SK-N-SH (cell line): ENCODE measurements at regions of chr1 and their contacts with region 1.

Region 1: GRCh38 chr1:85911742-85912141 is 203.5 kb upstream of the ZNHIT6 start:
- DNase-seq: no peak
- H3K4me3 ChIP-seq: peak overlapping the region in 1 of 2 experiments; percentile 9; a peak in 1 of 4 replicates
- H3K27ac ChIP-seq: no peak overlapping the region
- H3K4me1 ChIP-seq: no peaks in the 10 kb centered on the region
- H3K27me3 ChIP-seq: no peaks in the 10 kb centered on the region; the same call in 1 of the 2 replicates
- CTCF ChIP-seq: peak; percentile 47
- EP300 ChIP-seq: no peak
- RAD21 ChIP-seq: peak; percentile 25; the same call in 1 of the 2 replicates

Region 2: GRCh38 chr1:85894651-85895050 is 17.1 kb before region 1 on chr1:
- CTCF ChIA-PET with region 1: interaction called, 12 read pairs
- POLR2A ChIA-PET with region 1: no interaction called
- DNase-seq: peak; percentile 59
- H3K4me3 ChIP-seq: no peak overlapping the region; a peak in 1 of 4 replicates
- H3K27ac ChIP-seq: no peak overlapping the region
- H3K4me1 ChIP-seq: no peaks in the 10 kb centered on the region
- H3K27me3 ChIP-seq: no peaks in the 10 kb centered on the region
- CTCF ChIP-seq: peak; percentile 61
- EP300 ChIP-seq: no peak
- RAD21 ChIP-seq: peak; percentile 77

Region 3: GRCh38 chr1:85933961-85934360 is 22.2 kb after region 1 on chr1:
- CTCF ChIA-PET with region 1: no interaction called
- POLR2A ChIA-PET with region 1: no interaction called
- DNase-seq: no peak
- H3K4me3 ChIP-seq: no peak overlapping the region
- H3K27ac ChIP-seq: no peak overlapping the region
- H3K4me1 ChIP-seq: no peaks in the 10 kb centered on the region
- H3K27me3 ChIP-seq: no peaks in the 10 kb centered on the region
- CTCF ChIP-seq: no peak
- EP300 ChIP-seq: no peak
- RAD21 ChIP-seq: no peak